HAP-1 (cell line): ENCODE measurements at regions of chr12 and their contacts with region 1.

Region 1: DNA sequence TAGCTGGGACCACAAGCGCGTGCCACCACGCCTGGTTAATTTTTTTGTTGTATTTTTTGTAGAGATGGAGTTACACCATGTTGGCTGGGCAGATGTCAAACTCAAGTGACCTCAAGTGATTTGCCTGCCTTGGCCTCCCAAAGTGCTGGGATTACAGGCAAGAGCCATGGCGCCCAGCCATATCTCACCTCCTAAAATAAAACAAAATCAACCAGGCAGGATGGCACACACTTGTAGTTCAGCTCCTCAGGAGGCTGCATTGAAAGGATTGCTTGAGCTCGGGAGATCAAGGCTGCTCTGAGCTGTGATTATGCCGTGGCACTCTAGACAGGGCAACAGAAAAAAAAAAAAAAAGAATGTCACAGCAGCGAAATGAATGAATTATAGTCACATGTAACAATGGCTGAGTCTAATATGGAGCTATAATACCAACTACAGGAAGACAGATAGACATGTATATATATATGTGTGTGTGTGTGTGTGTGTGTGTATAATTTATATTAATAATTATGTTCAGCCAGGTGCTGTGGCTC is 19.3 kb upstream of the TMEM120B start:
- DNase-seq: no peak
- H3K4me3 ChIP-seq: no peak overlapping the region
- H3K4me1 ChIP-seq: no peaks in the 10 kb centered on the region
- H3K27me3 ChIP-seq: no peaks in the 10 kb centered on the region

Region 2: DNA sequence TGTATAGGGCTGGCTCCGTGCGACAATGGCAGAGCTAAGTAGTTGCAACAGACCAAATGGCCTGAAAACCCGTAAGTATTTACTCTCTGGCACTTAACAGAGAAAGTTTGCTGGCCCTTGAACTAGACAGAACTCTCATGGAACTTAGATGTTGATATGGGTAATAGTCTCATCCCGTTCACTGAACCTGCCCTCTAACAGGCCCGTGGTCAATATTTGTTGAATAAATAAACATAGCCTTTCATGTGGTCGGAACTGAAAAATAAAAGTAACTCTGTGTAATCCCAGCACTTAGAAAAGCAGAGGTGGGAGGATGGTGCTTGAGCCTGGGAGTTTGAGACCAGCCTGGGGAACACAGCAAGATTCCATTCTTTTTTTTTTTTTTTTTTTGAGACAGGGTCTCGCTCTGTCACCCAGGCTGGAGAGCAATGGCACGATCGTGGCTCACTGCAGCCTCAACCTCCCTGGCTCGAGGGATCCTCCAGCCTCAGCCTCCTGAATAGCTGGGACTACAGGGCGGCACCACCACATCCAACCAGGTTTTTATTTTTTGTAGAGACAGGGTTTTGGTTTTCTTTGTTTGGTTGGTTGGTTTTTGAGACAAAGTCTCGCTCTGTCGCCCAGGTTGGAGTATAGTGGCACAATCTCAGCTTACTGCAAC is 142.1 kb before region 1 on chr12:
- in situ Hi-C with region 1: loop called (anchors 5 kb)
- DNase-seq: no peak
- H3K4me3 ChIP-seq: no peak overlapping the region
- H3K4me1 ChIP-seq: no peaks in the 10 kb centered on the region
- H3K27me3 ChIP-seq: no peaks in the 10 kb centered on the region

Region 3: GRCh38 chr12:121776190-121777098 is 83.2 kb after region 1 on chr12:
- in situ Hi-C with region 1: loop called (anchors 5 kb)
- DNase-seq: peak; percentile 38 to 91
- H3K4me3 ChIP-seq: no peak overlapping the region
- H3K4me1 ChIP-seq: peaks cover 4% of the 10 kb centered on the region
- H3K27me3 ChIP-seq: no peaks in the 10 kb centered on the region